Left cardiac atrium (tissue), 4 donors: ENCODE measurements at regions of chr7 and their contacts with region 1.

Region 1: GRCh38 chr7:19665399-19666008 is 43.3 kb downstream of the POLR1F start:
- DNase-seq: no peak
- ATAC-seq: no peak

Region 2: DNA sequence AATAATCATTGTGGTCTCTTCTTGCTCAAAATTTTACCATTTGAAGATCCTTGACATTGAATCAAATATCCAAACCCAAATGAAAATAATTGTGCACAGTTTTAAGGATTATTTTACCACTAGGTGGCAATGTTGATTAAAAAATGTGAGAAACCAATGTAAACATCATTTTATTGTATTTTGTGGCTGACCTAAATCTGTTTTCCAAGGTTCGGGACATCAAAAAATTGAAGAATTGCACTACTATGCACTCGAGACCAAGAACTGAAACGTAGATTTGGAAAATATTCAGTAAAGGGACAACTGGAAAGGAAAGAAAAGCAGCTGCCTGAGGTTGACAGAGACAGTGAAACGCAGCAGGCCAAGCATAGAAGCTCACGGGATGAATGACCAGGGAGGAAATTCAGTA is 1984.6 kb before region 1 on chr7:
- intact Hi-C with region 1: loop called in 1 of 2 experiments (anchors 5 kb)
- DNase-seq: no peak
- ATAC-seq: peak in 1 of 2 donors; percentile 9

Region 3: DNA sequence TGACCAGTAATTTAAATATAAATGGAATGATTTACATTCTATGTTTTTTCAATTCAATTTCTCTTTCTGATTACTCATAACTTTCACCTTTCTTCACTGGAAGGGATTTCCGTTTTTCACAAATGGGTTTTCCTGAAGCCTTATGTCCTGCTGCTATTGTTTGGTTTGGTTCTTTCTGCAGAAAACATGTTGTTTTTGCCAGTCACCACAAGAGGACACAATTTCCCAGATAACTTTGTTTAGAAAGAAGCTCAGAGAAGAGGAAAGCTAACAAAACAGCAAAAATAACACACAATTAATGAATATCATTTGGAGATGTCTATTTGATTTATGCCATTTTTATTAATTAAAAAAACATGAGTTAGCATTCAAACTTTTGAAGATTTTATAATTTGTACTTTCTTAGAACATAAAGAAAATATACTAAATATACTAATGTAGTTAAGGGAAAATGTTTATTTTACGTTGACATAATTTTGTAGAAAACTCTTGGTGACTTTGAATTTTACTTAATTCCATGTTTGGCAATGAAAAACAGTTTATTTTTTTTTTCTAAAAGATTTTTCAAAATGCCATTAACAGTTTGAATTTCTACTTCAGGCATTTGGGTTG is 543.4 kb before region 1 on chr7:
- intact Hi-C with region 1: loop called in 1 of 2 experiments (anchors 10 kb)
- DNase-seq: no peak
- ATAC-seq: no peak

Region 4: GRCh38 chr7:19610194-19610943 is 55.1 kb before region 1 on chr7:
- intact Hi-C with region 1: no loop called
- DNase-seq: no peak
- ATAC-seq: peak in 1 of 2 donors; percentile 88